ENCODE measurements at regions of chr12 and their contacts with region 1.

Region 1: GRCh38 chr12:124927201-124928094 is 13.0 kb upstream of the UBC start:
- DNase-seq: peak; percentile 91
- H3K4me3 Mint-ChIP-seq: peak overlapping the region; percentile 89
- H3K27ac Mint-ChIP-seq: peak overlapping the region; percentile 96
- H3K4me1 Mint-ChIP-seq: peaks cover 37% of the 10 kb centered on the region
- H3K27me3 Mint-ChIP-seq: peaks cover 7% of the 10 kb centered on the region

Region 2: DNA sequence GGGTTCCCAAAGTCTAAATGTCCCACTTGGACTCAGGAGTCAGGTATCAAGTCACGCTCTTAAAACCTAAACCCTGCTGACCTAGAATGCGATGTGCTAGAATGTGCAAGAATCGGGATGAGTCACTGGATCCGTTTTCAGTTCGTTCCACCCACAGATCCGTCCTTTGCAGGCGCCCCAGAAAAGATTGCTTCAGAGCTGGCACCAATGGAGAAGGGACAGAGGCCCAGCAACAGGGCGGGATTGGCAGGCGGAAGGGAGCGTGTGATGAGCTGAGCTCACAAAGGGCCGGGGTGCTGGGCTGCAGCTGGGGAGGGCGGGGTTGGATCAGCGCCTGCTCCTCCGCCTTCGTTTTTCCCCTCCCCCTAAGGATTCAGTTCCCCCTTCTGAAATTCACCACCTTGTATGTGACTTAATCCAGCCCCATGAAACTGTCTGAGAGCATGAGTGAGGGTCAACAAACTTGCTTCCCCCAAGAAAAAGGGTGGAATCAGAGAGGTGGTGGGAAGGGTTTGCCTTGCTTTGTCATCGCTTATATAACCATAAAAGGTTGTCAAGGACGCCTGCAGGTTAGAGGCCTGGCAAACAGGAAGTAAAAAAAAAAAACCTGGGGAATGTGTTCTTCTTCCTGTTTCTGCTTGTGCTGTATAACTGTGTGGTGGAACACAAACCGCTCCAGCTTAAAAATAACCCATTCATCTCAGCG is 10.2 kb before region 1 on chr12:
- CTCF ChIA-PET with region 1: interaction called, 18 read pairs
- POLR2A ChIA-PET with region 1: interaction called, 3 read pairs
- DNase-seq: peak; percentile 97
- H3K4me3 Mint-ChIP-seq: peak overlapping the region; percentile 99
- H3K27ac Mint-ChIP-seq: peak overlapping the region; percentile 100
- H3K4me1 Mint-ChIP-seq: peaks cover 85% of the 10 kb centered on the region
- H3K27me3 Mint-ChIP-seq: no peaks in the 10 kb centered on the region

Measured in activated CD4-positive, alpha-beta T cell treated with anti-CD3 and anti-CD28 coated beads, Interleukin-2, amount 10 ng/mL, durations not matched to agents 7 days and 5 days (primary cell).